RWPE1 (cell line): ENCODE measurements at regions of chr20 and their contacts with region 1.

Region 1: DNA sequence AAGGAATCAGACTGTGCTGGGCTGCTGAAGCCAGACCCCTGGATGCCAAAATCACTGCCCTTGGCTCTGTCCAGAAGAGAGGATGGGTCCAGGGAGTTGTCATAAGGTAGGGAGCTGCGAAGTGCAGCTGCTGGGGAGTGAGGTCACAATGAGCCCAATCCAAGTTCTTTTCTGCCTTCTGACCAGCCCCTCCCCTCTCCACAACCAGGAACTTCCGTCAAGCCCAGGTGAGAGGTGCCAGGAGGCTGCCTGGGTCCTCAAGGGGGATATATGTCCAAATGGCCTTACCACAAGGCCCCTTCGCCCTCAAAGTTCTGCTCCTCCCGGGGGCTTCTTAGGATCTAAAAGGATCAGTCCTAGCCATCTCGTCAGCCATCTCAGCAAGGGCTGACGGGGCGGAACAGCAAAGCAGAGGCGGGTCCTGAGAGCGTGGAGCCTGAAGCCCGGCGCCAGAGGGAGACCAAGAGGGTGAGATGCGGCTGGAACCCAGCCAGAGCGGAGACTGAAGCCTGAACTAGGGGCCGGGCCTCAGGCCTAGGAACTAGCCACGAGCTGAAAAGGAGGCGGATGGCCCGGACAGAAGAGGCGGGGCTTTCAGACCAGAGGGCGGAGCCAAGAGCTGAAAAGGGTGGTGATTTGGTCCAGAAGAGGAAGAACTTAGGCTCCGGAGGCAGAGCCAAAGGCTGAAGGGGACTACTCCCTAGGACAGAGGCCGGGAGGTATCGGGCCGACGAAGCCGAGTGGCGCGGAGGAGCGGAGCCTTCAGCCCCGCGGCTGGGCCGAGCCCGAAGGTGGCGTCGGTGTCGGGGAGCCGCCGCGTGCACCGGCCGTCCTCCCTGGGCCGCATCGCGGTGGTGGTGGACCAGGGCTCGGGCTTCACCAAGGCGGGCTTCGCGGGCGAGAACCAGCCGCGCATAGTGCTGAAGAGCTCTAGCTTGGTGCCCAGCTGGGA is at the start of gene ACTL10:
- DNase-seq: peak; percentile 99
- H3K27ac ChIP-seq: peak within 1 kb of the TSS; percentile 88
- CTCF ChIP-seq: peak; percentile 45; the same call in 1 of the 2 replicates

Region 2: GRCh38 chr20:33443512-33444239 is 222.9 kb before region 1 on chr20 and contains the start of gene SNTA1:
- CTCF ChIA-PET with region 1: interaction called, 16 read pairs
- POLR2A ChIA-PET with region 1: no interaction called
- DNase-seq: peak; percentile 97
- H3K27ac ChIP-seq: peak within 1 kb of the TSS; percentile 54
- CTCF ChIP-seq: no peak

Region 3: GRCh38 chr20:33460711-33461110 is 205.9 kb before region 1 on chr20:
- CTCF ChIA-PET with region 1: interaction called, 23 read pairs
- POLR2A ChIA-PET with region 1: interaction called, 5 read pairs
- DNase-seq: no peak
- H3K27ac ChIP-seq: no peak overlapping the region
- CTCF ChIP-seq: no peak

Region 4: GRCh38 chr20:33653218-33653899 is 13.2 kb before region 1 on chr20:
- CTCF ChIA-PET with region 1: interaction called, 25 read pairs
- POLR2A ChIA-PET with region 1: interaction called, 5 read pairs
- DNase-seq: peak; percentile 85
- H3K27ac ChIP-seq: no peak overlapping the region
- CTCF ChIP-seq: peak; percentile 93

Region 5: GRCh38 chr20:33685328-33686099 is 18.9 kb after region 1 on chr20:
- CTCF ChIA-PET with region 1: interaction called, 14 read pairs
- POLR2A ChIA-PET with region 1: interaction called, 3 read pairs
- DNase-seq: peak; percentile 80
- H3K27ac ChIP-seq: peak overlapping the region; percentile 90
- CTCF ChIP-seq: no peak